Mammary epithelial cell (primary cell): ENCODE measurements at regions of chr7 and their contacts with region 1.

Region 1: DNA sequence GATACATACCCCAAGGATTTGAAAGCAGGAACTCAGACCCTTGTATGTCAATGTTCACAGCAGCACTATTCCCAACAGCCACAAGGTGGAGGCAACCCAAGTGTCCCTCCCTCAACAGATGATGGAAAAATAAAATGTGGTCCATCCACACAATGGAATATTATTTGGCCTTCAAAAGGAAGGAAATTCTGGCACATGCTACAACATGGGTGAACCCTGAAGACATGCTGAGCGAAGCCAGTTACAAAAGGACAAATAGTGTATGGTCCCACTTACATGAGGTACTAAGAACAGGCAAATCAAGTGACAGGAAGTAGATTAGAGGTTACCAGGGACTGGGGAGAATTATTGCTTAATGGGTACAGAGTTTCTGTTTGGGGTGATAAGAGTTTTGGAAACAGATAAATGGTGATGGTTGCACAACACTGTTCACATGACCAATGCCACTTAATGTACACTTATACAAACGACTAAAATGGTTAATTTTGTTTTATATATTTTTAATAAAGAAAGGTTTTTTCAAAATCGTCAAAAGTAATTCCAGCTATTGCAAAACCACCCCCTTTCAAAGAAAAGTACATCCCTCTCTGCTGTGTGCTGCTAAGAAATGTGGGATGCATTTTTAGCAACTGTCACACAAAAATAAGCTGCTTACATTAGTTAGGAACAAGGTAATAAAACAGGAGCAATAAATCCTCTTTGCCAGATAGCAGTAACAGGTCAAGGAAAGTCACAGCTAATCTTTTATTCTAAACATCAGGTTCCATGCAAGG is 85.7 kb downstream of the GRB10 start:
- DNase-seq: no peak
- H3K4me3 ChIP-seq: no peak overlapping the region
- H3K27ac ChIP-seq: no peak overlapping the region
- H3K4me1 ChIP-seq: no peaks in the 10 kb centered on the region
- H3K27me3 ChIP-seq: no peaks in the 10 kb centered on the region
- CTCF ChIP-seq: peak; percentile 57 to 58

Region 2: DNA sequence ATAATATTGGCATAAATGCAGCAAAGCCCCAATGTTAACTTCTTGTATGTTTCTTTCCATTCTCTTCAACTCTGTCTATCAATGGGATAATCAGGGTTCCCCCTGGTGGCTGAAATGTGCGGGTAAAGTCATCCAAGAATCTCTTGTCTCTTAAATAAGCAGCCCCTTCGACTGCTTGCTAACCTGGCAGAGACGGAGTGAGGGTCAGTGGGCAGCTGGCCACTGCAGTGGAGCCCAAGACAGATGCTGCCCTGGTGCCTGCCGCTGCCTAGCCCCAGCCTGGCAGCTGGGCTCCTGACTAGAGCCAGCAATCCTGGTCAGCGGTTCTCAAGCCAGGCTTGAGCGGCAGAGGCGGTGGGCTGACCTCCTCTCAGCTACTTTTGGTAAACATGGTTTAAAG is 370.8 kb after region 1 on chr7:
- CTCF ChIA-PET with region 1: no interaction called
- dilution Hi-C with region 1: no loop called
- in situ Hi-C with region 1: no loop called
- intact Hi-C with region 1: loop called (anchors 5 kb)
- DNase-seq: peak; percentile 42
- H3K4me3 ChIP-seq: no peak overlapping the region
- H3K27ac ChIP-seq: no peak overlapping the region
- H3K4me1 ChIP-seq: peaks cover 17% of the 10 kb centered on the region
- H3K27me3 ChIP-seq: peaks cover 1% of the 10 kb centered on the region
- CTCF ChIP-seq: peak; percentile 72 to 79